Thyroid gland (tissue), 4 donors: ENCODE measurements at regions of chr9 and their contacts with region 1.

Region 1: DNA sequence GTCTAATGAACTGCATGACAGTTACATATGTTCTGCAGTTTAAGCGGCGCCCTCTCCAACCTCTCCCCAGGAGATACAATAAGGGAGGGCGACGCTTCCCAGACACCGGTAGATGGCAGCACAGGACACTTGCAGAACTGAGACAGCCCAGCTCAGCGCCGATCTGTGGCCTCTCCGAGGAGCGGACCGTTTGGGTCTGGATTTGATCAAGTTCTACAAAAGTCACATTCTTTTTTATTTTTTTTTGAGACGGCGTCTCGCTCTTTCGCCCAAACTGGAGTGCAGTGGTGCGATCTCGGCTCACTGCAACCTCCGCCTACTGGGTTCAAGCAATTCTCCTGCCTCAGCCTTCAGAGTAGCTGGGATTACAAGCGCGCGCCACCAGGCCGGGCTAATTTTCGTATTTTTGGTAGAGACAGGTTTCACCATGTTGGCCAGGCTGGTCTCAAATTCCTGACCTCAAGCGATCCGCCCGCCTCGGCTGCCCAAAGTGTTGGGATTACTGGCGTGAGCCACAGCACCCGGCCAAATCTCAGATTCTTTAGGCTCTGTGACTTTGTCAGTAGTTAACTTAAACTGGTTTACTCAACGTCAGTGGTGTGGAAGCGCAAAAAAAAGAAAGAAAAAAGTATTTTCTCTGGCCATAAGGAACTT is 1.4 kb upstream of the ATOSB start:
- DNase-seq: peak; percentile 93 to 95
- H3K4me3 ChIP-seq: peak overlapping the region in 1 of 3 donors; percentile 42
- H3K27ac ChIP-seq: peak overlapping the region; percentile 20 to 92 (median 85)
- H3K4me1 ChIP-seq: peaks cover 20 to 38% of the 10 kb centered on the region in 2 donors
- H3K27me3 ChIP-seq: no peaks in the 10 kb centered on the region
- CTCF ChIP-seq: peak; percentile 82 to 98 (median 93)
- POLR2A ChIP-seq: no peak

Region 2: GRCh38 chr9:35257986-35258675 is 141.1 kb after region 1 on chr9:
- intact Hi-C with region 1: loop called (anchors 2 kb)
- DNase-seq: no peak
- H3K4me3 ChIP-seq: no peak overlapping the region
- H3K27ac ChIP-seq: no peak overlapping the region
- H3K4me1 ChIP-seq: no peaks in the 10 kb centered on the region
- H3K27me3 ChIP-seq: no peaks in the 10 kb centered on the region
- CTCF ChIP-seq: no peak
- POLR2A ChIP-seq: no peak

Region 3: GRCh38 chr9:35476596-35476995 is 359.6 kb after region 1 on chr9:
- intact Hi-C with region 1: loop called (anchors 5 kb)
- DNase-seq: no peak
- H3K4me3 ChIP-seq: no peak overlapping the region
- H3K27ac ChIP-seq: no peak overlapping the region
- H3K4me1 ChIP-seq: no peaks in the 10 kb centered on the region
- H3K27me3 ChIP-seq: no peaks in the 10 kb centered on the region
- CTCF ChIP-seq: no peak
- POLR2A ChIP-seq: no peak

Region 4: GRCh38 chr9:35553670-35554543 is 436.9 kb after region 1 on chr9:
- intact Hi-C with region 1: loop called (anchors 10 kb)
- DNase-seq: peak; percentile 69 to 78
- H3K4me3 ChIP-seq: no peak overlapping the region
- H3K27ac ChIP-seq: peak overlapping the region; percentile 41 to 65 (median 46)
- H3K4me1 ChIP-seq: peaks cover 16 to 34% of the 10 kb centered on the region in 2 donors
- H3K27me3 ChIP-seq: no peaks in the 10 kb centered on the region
- CTCF ChIP-seq: peak; percentile 61 to 96 (median 92)
- POLR2A ChIP-seq: no peak